ENCODE measurements at regions of chr5 and their contacts with region 1.

Region 1: GRCh38 chr5:59799668-59800346 is 93.7 kb downstream of the PDE4D start:
- DNase-seq: no peak
- ATAC-seq: peak; percentile 74

Region 2: DNA sequence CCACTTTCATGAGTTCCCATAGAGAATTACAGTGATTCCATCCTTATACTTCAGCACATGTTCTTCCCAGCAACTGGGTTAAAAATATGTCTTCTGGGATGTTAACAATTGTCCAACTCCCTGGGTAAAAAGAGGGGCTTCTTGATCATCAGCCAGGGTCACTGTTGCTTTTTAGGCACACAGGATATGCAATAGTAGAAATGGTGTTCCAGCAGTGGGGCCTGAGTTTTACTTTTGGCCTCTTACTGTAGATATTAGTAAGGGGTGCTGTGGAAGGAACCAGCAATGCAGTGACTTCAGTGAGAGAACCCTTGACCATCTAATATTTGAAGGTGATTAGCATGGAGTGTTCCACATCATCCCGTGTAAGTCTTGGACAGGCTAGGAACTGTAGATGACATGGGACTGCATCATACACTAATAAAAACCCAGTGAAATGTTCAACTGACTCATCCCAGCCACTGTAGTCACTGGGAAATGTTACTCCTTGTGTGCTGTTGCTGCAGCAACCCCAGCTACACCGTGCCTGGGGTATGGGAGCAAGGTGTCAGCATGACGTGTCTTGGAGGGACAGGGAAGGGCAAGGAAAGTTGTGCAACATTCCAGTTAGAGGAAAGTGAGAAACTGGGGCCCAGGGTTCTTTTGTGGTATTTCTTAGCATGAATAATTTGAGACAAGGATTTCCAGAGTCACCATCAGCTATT is 606.0 kb before region 1 on chr5:
- intact Hi-C with region 1: loop called (anchors 10 kb)
- DNase-seq: no peak
- ATAC-seq: peak; percentile 43

Region 3: DNA sequence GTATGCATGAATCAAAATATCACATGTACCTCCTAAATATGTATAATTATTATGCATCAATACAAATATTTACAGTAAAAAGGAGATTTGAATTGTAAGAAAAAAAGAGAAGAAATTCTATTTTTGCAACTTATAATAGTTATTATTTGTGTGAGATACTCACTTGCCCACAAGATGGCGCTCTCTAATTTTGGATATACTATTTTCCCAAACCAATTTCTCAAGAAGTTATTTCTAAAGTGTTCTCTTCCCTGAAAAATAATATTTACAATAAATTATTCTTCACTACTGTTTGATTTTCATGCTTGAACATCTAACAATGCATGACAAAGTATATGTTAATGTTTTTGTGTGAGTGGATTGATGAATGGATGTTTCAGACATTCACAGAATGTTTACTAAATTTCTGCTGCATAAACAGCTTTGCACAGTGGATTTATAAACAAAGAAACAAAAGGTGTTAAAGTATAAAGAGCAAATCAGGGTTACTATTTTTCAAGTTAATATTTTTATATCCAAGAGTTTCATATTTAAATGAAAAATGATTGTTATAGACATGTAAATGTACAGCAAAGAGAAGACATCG is 409.6 kb before region 1 on chr5:
- intact Hi-C with region 1: loop called (anchors 5 kb)
- DNase-seq: no peak
- ATAC-seq: no peak

Region 4: DNA sequence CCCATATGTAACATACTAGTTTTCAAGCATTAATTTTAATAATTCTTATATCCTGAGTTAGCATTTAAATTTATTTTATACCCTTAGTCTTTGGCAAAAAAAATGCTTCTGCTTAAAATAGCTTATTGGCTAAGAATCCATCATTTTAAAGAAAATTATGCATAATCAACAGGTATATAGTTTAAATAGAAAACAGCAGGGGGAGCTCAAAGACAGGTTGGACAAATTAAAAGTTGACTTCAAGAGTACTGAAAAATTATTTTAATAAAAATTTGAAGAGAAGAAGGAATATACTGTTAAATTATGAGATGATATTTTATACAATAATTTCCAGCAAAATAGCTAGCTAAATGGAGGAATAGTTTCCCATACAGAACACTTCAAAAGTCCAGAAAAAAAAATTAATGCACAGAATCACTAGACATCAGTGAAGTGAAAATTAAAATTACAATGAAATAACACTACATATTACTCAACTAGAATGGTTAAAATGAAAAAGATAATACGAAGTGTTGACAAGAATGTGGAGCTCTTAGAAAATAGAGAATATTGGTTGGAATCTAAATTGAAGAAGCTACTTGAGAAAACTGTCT is 293.4 kb before region 1 on chr5:
- intact Hi-C with region 1: loop called (anchors 5 kb)
- DNase-seq: no peak
- ATAC-seq: no peak

Region 5: GRCh38 chr5:59673438-59674058 is 126.3 kb before region 1 on chr5:
- intact Hi-C with region 1: loop called (anchors 5 kb)
- DNase-seq: no peak
- ATAC-seq: no peak